ENCODE measurements at regions of chr12 and their contacts with region 1.

Region 1: DNA sequence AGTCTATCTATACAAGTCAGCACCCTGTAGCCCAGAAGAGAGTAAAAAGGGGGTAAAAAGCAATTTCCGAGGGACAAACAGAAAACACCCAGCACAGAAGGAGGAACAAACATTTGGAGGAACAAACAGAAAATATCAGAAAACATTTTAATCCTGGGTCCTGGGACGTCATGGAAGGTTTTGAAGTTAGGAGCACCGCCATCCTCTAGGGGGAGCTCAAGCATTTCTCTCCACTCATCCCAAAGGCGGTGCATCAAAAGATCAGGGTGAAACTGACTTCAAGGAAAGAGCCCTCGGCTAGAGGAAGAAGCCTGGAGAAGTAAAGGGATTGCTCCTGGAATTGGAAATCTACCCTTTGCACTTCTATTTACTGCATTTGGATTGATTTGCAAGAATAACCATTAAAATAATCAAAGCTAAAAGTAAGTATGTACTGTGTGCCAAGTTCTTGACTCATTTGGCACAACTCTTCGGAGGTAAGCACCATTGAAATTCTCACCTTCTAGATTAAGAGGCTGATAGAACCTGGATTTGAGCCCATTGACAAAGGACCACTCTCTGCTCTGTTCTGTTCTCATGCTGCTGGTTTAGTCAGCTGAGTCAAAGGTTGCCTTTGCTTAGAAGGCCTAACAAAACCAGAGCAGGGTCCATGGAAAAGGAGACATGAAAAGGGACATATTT is 17.2 kb upstream of the POC1B start:
- DNase-seq: peak; percentile 26 to 45
- ATAC-seq: peak; percentile 61 to 80
- H3K4me3 ChIP-seq: peak overlapping the region in 1 of 4 donors; percentile 13
- H3K27ac ChIP-seq: no peak overlapping the region
- H3K4me1 ChIP-seq: peaks cover 7 to 29% of the 10 kb centered on the region in 2 donors
- H3K27me3 ChIP-seq: no peaks in the 10 kb centered on the region
- CTCF ChIP-seq: peak; percentile 59 to 86 (median 67)
- POLR2A ChIP-seq: no peak

Region 2: GRCh38 chr12:88448337-88448915 is 1094.6 kb before region 1 on chr12:
- in situ Hi-C with region 1: no loop called
- intact Hi-C with region 1: no loop called
- DNase-seq: no peak
- ATAC-seq: no peak
- H3K4me3 ChIP-seq: no peak overlapping the region
- H3K27ac ChIP-seq: no peak overlapping the region
- H3K4me1 ChIP-seq: no peaks in the 10 kb centered on the region
- H3K27me3 ChIP-seq: no peaks in the 10 kb centered on the region
- CTCF ChIP-seq: no peak
- POLR2A ChIP-seq: no peak

Region 3: DNA sequence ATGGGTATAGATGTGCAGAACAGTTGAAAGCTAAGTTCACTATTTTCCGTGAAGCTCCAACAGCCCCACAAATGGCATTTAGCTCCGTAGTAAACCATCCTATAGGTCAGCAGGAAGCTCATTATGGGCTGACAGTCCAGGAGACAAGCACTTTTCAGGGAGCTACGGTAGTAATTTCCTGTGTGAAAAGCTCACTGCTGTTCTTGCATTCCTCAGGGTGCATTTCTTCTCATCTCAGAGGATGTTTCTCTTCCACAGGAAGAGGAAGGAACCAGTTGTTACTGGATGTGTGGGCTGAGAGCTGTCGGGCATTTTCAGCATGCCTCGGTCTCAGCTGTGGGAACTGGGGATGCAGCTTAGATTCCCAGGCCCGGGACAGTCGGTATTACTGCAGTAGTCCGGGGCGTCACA is 91.2 kb before region 1 on chr12:
- in situ Hi-C with region 1: no loop called
- intact Hi-C with region 1: no loop called
- DNase-seq: no peak
- ATAC-seq: peak in 1 of 2 donors; percentile 30
- H3K4me3 ChIP-seq: no peak overlapping the region
- H3K27ac ChIP-seq: peak overlapping the region in 3 of 4 donors; percentile 19 to 32 (median 20)
- H3K4me1 ChIP-seq: peaks cover 29 to 33% of the 10 kb centered on the region in 2 donors
- H3K27me3 ChIP-seq: no peaks in the 10 kb centered on the region
- CTCF ChIP-seq: no peak
- POLR2A ChIP-seq: no peak

Region 4: DNA sequence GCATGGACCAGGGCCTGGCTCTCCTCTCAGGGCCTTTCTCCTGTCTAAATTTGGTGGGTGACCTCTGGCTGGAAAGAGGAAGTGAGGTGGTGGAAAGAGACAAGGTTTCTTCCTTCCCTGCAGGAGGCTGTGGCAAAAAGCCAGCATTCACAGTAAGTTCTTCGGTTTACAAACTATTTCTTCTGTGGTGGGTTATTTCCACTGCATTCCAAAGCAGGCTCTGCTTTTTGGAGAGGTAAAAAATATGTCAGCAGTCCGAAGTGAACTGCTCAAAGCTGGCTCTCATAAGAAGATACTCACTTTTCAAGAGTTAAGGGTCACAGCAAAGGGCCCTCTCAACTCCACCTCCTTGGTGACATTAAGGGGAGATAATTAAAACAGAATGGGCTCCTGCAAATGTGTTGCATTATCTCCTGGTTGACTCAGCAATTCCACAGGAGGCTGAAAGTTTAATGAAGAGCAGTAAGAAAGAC is 31.7 kb after region 1 on chr12:
- in situ Hi-C with region 1: no loop called
- intact Hi-C with region 1: no loop called
- DNase-seq: no peak
- ATAC-seq: no peak
- H3K4me3 ChIP-seq: no peak overlapping the region
- H3K27ac ChIP-seq: no peak overlapping the region
- H3K4me1 ChIP-seq: peaks cover 0 to 5% of the 10 kb centered on the region in 2 donors
- H3K27me3 ChIP-seq: no peaks in the 10 kb centered on the region
- CTCF ChIP-seq: no peak
- POLR2A ChIP-seq: no peak

Region 5: GRCh38 chr12:89709157-89709994 is 166.3 kb after region 1 on chr12:
- in situ Hi-C with region 1: no loop called
- intact Hi-C with region 1: loop called (anchors 5 kb)
- DNase-seq: peak; percentile 98 to 99
- ATAC-seq: peak; percentile 82 to 84
- H3K4me3 ChIP-seq: peak overlapping the region; percentile 76 to 96 (median 92)
- H3K27ac ChIP-seq: peak overlapping the region; percentile 97 to 99 (median 98)
- H3K4me1 ChIP-seq: peaks cover 18 to 34% of the 10 kb centered on the region in 2 donors
- H3K27me3 ChIP-seq: no peaks in the 10 kb centered on the region
- CTCF ChIP-seq: peak in 2 of 5 experiments; percentile 42 to 59
- POLR2A ChIP-seq: peak; percentile 97 to 98

Region 6: GRCh38 chr12:90111791-90112580 is 568.9 kb after region 1 on chr12:
- in situ Hi-C with region 1: loop called in 3 of 4 experiments (anchors 10 kb)
- intact Hi-C with region 1: no loop called
- DNase-seq: no peak
- ATAC-seq: no peak
- H3K4me3 ChIP-seq: peak overlapping the region in 3 of 4 donors; percentile 13 to 34 (median 16)
- H3K27ac ChIP-seq: no peak overlapping the region
- H3K4me1 ChIP-seq: peaks cover 5 to 11% of the 10 kb centered on the region in 2 donors
- H3K27me3 ChIP-seq: no peaks in the 10 kb centered on the region
- CTCF ChIP-seq: no peak
- POLR2A ChIP-seq: no peak

Region 7: DNA sequence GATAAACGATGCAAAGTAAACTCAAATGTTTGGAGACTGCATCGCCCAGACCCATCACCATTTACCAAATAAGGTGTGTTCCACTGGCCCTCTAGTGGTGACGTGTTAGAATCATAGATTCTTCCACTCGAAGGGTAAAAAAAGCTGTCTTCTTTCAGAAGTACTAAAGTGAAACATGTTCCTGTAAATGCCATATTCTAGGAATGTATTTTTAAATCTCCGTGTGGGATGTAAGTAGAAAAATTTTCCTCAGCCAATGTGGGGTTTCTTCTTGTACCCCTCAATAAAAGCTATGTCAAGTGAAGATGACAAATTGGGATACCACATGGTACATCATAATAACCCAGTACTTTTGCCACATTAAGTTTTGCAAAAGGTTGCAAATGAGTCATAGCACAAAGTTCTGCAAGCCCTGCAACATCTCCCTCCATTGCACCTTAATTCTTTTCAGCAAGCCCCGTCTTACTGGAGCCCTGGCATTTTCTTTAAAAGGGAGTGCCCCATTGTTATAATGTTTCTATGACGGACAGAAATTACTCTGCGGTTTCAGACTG is 1311.2 kb after region 1 on chr12:
- in situ Hi-C with region 1: no loop called
- intact Hi-C with region 1: loop called (anchors 10 kb)
- DNase-seq: no peak
- ATAC-seq: no peak
- H3K4me3 ChIP-seq: no peak overlapping the region
- H3K27ac ChIP-seq: no peak overlapping the region
- H3K4me1 ChIP-seq: no peaks in the 10 kb centered on the region
- H3K27me3 ChIP-seq: no peaks in the 10 kb centered on the region
- CTCF ChIP-seq: peak in 3 of 5 experiments; percentile 23 to 40 (median 39)
- POLR2A ChIP-seq: no peak